Body of pancreas (tissue), 4 donors: ENCODE measurements at regions of chr21 and their contacts with region 1.

Region 1: GRCh38 chr21:25881525-25882376 is 147.0 kb downstream of the GABPA start:
- DNase-seq: peak; percentile 64 to 74 (median 66)
- ATAC-seq: peak; percentile 69
- H3K4me3 ChIP-seq: no peak overlapping the region
- H3K27ac ChIP-seq: no peak overlapping the region
- H3K4me1 ChIP-seq: peaks cover 8% of the 10 kb centered on the region
- H3K27me3 ChIP-seq: no peaks in the 10 kb centered on the region
- CTCF ChIP-seq: peak; percentile 80 to 92 (median 87)
- POLR2A ChIP-seq: no peak

Region 2: DNA sequence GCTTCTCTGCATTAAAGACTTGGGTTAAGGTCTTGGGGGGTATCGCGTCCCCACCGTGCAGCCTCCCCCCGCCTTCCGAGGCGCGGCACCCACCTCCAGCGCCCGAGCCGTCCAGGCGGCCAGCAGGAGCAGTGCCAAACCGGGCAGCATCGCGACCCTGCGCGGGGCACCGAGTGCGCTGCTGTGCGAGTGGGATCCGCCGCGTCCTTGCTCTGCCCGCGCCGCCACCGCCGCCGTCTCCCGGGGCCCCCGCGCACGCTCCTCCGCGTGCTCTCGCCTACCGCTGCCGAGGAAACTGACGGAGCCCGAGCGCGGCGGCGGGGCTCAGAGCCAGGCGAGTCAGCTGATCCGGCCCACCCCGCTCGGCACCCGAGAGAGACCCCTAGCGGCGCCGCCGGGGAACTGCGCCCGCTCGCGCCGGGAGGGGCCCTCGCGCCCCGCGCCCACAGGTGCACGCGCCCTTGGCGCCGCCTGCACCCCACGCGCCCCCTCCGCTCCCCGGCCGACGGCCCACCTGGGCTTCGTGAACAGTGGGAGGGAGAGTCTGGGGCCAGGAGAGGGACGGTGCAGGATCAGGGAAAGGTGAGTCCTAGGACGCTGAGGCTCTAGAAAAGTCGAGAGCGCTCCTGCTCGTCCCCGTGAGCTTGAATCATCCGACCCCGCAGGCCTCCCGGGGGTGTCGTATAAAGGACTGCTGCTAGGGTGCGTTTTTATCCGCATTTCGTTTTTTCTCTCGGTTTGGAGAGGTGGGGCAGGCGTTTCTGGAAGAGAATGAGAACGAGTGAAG is 288.9 kb after region 1 on chr21 and contains the start of gene APP:
- intact Hi-C with region 1: loop called (anchors 5 kb)
- DNase-seq: peak; percentile 86 to 91 (median 88)
- ATAC-seq: peak; percentile 85
- H3K4me3 ChIP-seq: peak within 1 kb of the TSS; percentile 85
- H3K27ac ChIP-seq: peak within 1 kb of the TSS; percentile 77 to 93 (median 90)
- H3K4me1 ChIP-seq: peaks cover 39% of the 10 kb centered on the region
- H3K27me3 ChIP-seq: no peaks in the 10 kb centered on the region
- CTCF ChIP-seq: peak; percentile 63 to 99 (median 99)
- POLR2A ChIP-seq: peak; percentile 81 to 89 (median 84)
- total RNA-seq, gene APP: 256 to 423 TPM

Region 3: DNA sequence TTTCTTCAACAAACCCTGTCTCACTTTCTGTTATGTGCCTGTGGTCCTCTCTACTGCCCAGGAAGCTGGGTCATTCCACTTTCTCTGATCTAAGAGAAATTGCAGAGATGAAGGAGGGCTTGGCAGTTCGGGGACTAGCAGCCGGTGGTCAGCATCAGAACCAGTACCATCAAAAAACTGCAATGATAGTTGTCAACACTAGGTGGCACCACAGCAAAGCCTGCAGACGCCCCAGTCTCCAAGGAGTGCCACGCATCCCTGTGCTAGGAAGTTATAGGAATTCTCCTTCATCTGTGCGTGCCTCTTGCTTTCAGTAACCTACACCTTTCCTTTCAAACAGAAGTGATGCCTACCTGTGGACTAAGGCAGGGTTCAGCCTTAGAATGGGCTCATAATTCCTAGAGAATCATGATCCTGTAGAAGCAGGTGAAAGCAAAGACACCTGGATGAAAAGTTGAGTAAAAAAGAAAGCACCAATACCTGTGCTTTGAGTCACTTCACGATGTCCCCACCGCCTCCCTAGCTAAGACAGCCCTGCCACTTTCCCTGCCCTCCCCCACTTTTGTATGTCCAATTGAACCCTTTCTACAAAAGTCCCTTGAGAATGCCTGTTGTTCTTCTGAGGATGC is 834.2 kb after region 1 on chr21:
- intact Hi-C with region 1: loop called (anchors 10 kb)
- DNase-seq: peak; percentile 45 to 55 (median 52)
- ATAC-seq: no peak
- H3K4me3 ChIP-seq: no peak overlapping the region
- H3K27ac ChIP-seq: no peak overlapping the region
- H3K4me1 ChIP-seq: no peaks in the 10 kb centered on the region
- H3K27me3 ChIP-seq: no peaks in the 10 kb centered on the region
- CTCF ChIP-seq: peak; percentile 48 to 70 (median 56)
- POLR2A ChIP-seq: no peak